HepG2 (cell line): ENCODE measurements at regions of chr6 and their contacts with region 1.

Region 1: DNA sequence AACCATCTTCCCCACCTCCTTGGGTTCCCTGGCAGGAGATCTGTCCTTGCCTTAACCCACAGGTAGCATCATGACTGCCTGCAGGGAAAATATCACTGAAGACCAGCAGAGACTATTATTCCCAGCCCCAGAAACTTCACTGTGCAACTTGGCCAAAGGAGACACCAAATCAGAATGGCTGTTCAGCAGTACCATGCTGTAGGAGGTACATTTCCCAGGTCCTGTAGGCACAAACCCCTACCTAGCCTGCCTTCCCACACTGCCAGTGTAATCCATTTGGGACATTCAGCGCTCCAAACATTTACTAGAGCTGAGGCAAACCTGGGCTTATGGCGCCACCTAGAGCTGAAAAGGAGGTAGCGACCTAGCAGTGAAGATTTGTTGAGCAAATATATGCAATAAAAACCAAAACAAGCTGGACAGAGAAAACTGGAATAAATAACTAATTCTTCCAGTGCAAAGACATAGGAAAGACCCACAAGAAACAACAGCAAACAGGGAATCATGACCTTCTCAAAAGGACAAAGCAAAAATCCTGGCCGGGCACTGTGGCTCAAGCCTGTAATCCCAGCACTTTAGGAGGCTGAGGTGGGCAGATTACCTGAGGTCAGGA is 60.3 kb downstream of the VTA1 start:
- DNase-seq: peak; percentile 67
- ATAC-seq: peak; percentile 99
- H3K4me3 ChIP-seq: no peak overlapping the region
- H3K27ac ChIP-seq: no peak overlapping the region
- H3K4me1 ChIP-seq: no peaks in the 10 kb centered on the region
- H3K27me3 ChIP-seq: no peaks in the 10 kb centered on the region
- CTCF ChIP-seq: peak; percentile 94
- EP300 ChIP-seq: no peak
- POLR2A ChIP-seq: no peak
- RAD21 ChIP-seq: peak; percentile 92

Region 2: GRCh38 chr6:141618180-141618581 is 589.2 kb before region 1 on chr6:
- CTCF ChIA-PET with region 1: no interaction called
- POLR2A ChIA-PET with region 1: no interaction called
- in situ Hi-C with region 1: no loop called
- intact Hi-C with region 1: no loop called
- DNase-seq: no peak
- ATAC-seq: no peak
- H3K4me3 ChIP-seq: no peak overlapping the region
- H3K27ac ChIP-seq: no peak overlapping the region
- H3K4me1 ChIP-seq: no peaks in the 10 kb centered on the region
- H3K27me3 ChIP-seq: no peaks in the 10 kb centered on the region
- CTCF ChIP-seq: no peak
- EP300 ChIP-seq: no peak
- POLR2A ChIP-seq: no peak
- RAD21 ChIP-seq: no peak

Region 3: DNA sequence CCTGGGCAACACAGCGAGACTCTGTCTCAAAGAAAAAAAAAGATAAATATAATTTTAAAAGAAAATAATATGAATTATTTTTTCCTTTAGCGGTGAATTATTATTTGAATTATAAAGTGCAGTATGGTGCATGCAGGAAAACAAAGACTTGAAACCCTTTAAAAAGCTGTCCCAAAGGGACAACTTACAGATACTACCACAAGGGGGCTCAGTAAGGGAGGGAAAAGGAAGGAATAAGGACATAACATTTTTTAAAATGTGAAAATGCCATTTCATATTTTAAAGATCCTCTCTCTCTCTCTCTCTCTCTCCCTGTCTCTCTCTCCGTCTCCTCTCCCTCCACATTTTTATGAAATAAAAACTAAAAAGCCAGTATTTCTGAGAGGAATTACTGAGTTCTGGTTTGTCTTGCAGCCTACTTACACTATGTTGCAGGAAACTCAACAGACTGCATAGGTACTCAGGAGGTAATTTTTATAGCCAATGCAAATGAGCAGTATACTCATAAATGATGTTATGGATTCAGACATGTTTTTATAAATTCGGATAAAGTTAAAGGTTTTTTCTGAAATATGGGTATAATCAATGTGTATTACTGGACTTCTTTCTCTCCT is 529.7 kb before region 1 on chr6:
- CTCF ChIA-PET with region 1: no interaction called
- POLR2A ChIA-PET with region 1: no interaction called
- in situ Hi-C with region 1: no loop called
- intact Hi-C with region 1: loop called (anchors 10 kb)
- DNase-seq: peak; percentile 43
- ATAC-seq: peak; percentile 85
- H3K4me3 ChIP-seq: no peak overlapping the region
- H3K27ac ChIP-seq: no peak overlapping the region
- H3K4me1 ChIP-seq: no peaks in the 10 kb centered on the region
- H3K27me3 ChIP-seq: no peaks in the 10 kb centered on the region; a peak in 1 of 5 replicates
- CTCF ChIP-seq: peak; percentile 63
- EP300 ChIP-seq: no peak
- POLR2A ChIP-seq: no peak
- RAD21 ChIP-seq: no peak

Region 4: DNA sequence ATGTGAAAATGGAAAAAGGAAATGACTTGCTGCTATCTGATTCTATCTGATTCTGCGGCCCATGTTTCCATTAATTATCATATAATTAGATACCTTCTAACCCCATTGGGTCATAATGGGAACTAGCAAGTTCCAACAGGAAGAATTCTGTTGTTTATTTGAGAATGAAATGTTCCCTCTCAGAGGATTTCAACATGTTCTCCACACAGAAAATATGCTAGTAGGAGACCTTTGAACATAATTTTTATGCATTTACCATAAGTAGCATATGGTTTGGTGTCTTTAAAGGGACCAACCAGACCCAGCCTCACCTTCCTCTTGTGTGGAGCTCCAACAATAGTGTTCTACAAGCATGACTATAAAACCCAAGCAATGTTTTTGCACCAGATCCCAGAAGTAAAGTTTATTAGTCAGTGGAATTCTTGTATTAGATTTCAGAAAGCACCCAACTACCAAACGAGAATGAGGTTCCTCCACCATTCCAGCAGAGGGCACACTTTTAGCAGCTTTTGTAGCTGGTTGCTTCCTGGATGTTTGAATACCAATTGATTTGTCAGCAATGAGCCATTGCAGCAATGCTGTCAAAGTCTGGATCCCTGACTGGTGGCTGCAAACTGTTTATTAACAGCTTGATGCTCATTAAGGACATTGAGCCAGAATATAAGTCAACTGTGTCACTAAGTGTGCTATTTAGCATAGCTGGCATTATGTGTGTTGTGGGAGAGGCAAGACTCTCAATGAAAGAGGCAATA is 218.2 kb before region 1 on chr6:
- CTCF ChIA-PET with region 1: interaction called, 13 read pairs
- POLR2A ChIA-PET with region 1: no interaction called
- in situ Hi-C with region 1: loop called (anchors 10 kb)
- intact Hi-C with region 1: loop called (anchors 1 kb)
- DNase-seq: peak; percentile 65
- ATAC-seq: peak; percentile 92
- H3K4me3 ChIP-seq: no peak overlapping the region
- H3K27ac ChIP-seq: no peak overlapping the region
- H3K4me1 ChIP-seq: no peaks in the 10 kb centered on the region
- H3K27me3 ChIP-seq: no peaks in the 10 kb centered on the region
- CTCF ChIP-seq: peak; percentile 74
- EP300 ChIP-seq: no peak
- POLR2A ChIP-seq: no peak
- RAD21 ChIP-seq: peak; percentile 49; the same call in 1 of the 2 replicates

Region 5: DNA sequence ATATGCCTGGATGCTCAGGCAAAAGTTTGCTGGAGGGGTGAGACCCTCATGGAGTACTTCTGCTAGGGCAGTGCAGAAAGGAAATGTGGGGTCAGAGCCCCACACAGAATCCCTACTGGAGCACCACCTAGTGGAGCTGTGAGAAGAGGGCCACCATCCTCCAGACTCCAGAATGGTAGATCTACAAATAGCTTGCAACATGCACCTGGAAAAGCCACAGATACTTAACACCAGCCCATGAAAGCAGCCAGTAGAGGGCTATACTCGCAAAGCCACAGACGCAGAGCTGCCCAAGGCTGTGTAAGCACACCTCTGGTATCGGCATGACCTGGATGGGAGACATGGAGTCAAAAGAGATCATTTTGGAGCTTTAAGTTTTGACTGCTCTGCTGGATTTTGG is 135.4 kb before region 1 on chr6:
- CTCF ChIA-PET with region 1: no interaction called
- POLR2A ChIA-PET with region 1: no interaction called
- in situ Hi-C with region 1: no loop called
- intact Hi-C with region 1: loop called (anchors 1 kb)
- DNase-seq: peak; percentile 73
- ATAC-seq: peak; percentile 100
- H3K4me3 ChIP-seq: no peak overlapping the region
- H3K27ac ChIP-seq: no peak overlapping the region
- H3K4me1 ChIP-seq: 0 out of 2 replicates have a peak, but pooled peaks cover 7% of the 10 kb centered on the region
- H3K27me3 ChIP-seq: no peaks in the 10 kb centered on the region
- CTCF ChIP-seq: peak; percentile 67
- EP300 ChIP-seq: no peak
- POLR2A ChIP-seq: no peak
- RAD21 ChIP-seq: peak; percentile 53; the same call in 1 of the 2 replicates

Region 6: DNA sequence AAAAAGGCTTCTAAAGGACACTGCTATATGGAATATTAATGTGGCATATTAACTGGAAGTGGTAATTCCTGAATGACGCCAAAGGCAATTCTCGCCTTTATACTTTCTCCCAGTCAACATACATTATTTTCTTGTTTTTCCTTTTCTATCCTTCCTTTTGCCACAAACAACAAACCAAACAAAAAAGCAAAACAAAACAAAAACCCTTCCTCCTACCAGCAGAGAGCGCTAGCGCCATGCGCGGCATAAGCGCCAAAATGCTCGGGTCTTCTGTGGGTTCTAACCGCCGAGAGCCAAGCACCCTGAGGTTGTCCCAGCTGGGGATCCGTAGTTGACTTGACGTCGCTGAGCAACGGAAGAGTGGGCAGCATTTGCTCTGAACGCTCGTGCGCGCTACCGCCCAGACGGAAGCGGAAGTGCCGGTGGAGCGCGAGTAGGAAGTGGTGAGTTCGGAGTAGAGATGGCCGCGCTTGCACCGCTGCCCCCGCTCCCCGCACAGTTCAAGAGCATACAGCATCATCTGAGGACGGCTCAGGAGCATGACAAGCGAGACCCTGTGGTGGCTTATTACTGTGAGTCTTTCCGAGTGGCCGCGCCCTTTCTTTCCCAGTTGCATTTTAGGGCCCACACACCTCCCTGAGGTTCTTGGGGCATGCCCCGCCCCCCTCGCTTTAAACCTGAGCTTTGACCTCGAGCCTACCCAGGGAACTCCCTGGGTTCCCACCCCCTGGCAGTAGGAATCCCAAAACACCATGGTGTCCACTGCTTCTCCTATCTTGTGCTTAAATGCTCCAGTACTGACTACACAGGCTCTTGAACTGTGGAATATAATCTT is 60.3 kb before region 1 on chr6 and contains the starts of genes NMBR and VTA1:
- CTCF ChIA-PET with region 1: interaction called, 17 read pairs
- POLR2A ChIA-PET with region 1: interaction called, 8 read pairs
- in situ Hi-C with region 1: loop called (anchors 5 kb)
- intact Hi-C with region 1: loop called (anchors 1 kb)
- DNase-seq: peak; percentile 100
- ATAC-seq: peak; percentile 100
- H3K4me3 ChIP-seq: peak within 1 kb of the TSS; percentile 79 to 91 (median 81)
- H3K27ac ChIP-seq: peak within 1 kb of the TSS; percentile 63
- H3K4me1 ChIP-seq: peaks cover 30% of the 10 kb centered on the region
- H3K27me3 ChIP-seq: no peaks in the 10 kb centered on the region; a peak in 1 of 5 replicates
- CTCF ChIP-seq: peak; percentile 99
- EP300 ChIP-seq: peak in 1 of 2 experiments; percentile 62; a peak in 2 of 4 replicates
- POLR2A ChIP-seq: peak; percentile 97 to 98
- RAD21 ChIP-seq: peak; percentile 93
- total RNA-seq, gene NMBR: not detected in 2 replicates
- total RNA-seq, gene VTA1: 89.1 and 143 TPM in 2 replicates

Region 7: DNA sequence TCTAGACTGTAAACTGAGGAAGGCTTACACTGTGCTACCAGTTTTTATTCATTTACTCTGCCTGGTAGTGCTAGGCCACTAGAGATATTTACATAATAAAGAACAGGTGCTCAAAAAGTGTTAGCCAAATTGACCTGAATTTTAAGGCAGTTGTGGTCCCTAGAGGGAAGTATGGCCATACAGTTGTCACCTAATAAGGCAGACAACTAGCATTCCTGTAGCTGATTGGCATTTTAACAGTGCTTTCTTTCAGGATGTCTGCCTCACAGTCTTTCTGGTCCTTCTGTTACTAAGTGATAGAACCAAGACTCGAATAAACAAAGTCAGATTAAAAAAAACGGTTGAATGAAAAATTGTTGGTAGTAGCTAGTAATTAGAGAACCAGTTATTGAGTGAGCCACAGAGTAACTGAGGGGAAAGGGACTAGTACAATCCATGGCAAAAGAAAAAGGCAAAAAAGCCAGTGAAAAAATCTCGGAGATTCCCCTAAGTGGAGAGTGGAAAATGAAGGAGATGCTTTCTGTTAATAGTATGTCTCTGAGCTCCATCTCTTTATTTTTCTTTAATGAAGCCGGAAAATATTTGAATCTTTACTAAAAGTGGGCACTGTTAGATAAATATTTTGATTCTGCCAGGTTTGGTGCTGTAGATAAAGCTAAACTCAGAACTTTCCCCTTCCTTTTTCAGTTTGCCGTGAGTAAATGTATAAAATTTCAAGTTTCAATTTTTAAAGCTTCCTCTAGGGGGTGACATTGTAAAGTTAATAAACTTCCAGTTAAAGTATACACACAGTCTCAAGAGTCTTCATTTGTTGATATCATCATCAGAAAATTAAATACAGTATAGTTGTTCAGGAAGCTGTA is 51.2 kb before region 1 on chr6:
- CTCF ChIA-PET with region 1: interaction called, 18 read pairs
- POLR2A ChIA-PET with region 1: no interaction called
- in situ Hi-C with region 1: no loop called
- intact Hi-C with region 1: loop called (anchors 1 kb)
- DNase-seq: peak; percentile 30
- ATAC-seq: peak; percentile 75
- H3K4me3 ChIP-seq: no peak overlapping the region
- H3K27ac ChIP-seq: peak overlapping the region; percentile 1
- H3K4me1 ChIP-seq: peaks cover 6% of the 10 kb centered on the region
- H3K27me3 ChIP-seq: no peaks in the 10 kb centered on the region
- CTCF ChIP-seq: peak; percentile 53
- EP300 ChIP-seq: no peak
- POLR2A ChIP-seq: no peak
- RAD21 ChIP-seq: no peak

Region 8: DNA sequence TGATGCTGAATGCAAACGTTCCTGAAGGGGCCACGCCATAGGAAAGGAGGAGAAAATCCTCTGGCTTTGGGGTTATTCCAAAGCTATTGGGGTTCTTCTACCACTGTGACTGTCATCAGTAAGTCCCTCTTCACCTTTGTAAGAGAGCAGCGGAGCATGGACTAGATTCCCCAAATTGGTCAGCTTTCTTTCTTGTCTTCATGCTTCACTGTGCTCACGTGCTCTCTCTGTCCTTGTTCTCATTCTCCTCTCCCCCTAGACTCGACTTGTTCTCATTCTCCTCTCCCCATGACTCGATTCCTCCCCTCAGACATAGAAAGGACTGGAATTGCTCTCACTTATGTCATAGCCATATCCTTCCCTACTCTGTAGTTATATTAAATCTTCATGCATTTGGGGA is 39.6 kb after region 1 on chr6:
- CTCF ChIA-PET with region 1: no interaction called
- POLR2A ChIA-PET with region 1: no interaction called
- in situ Hi-C with region 1: no loop called
- intact Hi-C with region 1: no loop called
- DNase-seq: no peak
- ATAC-seq: no peak
- H3K4me3 ChIP-seq: no peak overlapping the region
- H3K27ac ChIP-seq: no peak overlapping the region
- H3K4me1 ChIP-seq: peaks cover 8% of the 10 kb centered on the region; the same call in 1 of the 2 replicates
- H3K27me3 ChIP-seq: no peaks in the 10 kb centered on the region
- CTCF ChIP-seq: no peak
- EP300 ChIP-seq: no peak
- POLR2A ChIP-seq: no peak
- RAD21 ChIP-seq: no peak